ENCODE measurements at regions of chr2 and their contacts with region 1.

Region 1: DNA sequence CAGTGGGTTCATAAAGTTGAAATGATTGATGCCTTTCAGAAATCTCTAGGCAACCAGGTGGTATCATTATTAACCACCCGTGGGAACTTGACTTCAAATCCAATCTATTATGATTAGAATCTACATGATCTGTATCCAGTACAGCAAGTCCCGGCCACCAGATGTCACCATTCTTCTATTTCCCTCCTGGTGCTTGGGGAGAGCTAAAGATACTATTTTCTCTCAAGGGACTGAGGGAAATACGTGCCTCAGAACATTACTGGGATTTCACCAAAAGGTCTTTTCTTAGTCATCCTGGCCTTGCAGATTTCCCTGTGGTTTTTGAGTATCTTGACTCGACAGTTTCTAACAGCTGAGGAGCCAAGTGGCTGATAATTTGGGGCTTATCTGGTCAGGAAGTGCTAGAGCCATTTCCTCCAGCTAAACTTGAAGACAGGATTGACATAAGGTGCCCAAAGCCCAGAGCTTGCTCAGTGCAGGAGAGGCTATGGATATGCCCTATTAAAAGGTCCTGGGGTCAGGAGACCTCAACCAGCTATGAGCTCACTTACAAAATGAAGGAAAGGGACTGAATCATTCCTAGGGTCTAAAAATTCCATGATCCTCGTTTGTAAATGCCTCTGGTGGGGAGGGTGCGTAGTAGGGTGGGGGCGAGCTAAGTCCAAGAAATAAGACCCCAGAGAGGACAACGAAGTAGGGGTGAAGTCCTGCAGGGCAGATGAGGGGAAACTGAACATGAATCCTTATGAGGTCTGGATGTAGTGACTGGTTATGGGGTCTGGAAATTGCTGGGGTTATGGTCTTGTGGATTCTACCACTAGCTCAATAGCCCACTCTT is 135.4 kb upstream of the MGAT5 start:
- DNase-seq: peak; percentile 60 to 91
- ATAC-seq: peak; percentile 43 to 65 (median 51)
- H3K4me3 ChIP-seq: no peak overlapping the region
- H3K4me3 Mint-ChIP-seq: peak overlapping the region; percentile 100
- H3K27ac ChIP-seq: no peak overlapping the region
- H3K27ac Mint-ChIP-seq: peak overlapping the region; percentile 89 to 94
- H3K4me1 ChIP-seq: peaks cover 34% of the 10 kb centered on the region
- H3K4me1 Mint-ChIP-seq: peaks cover 37 to 39% of the 10 kb centered on the region in 2 donors
- H3K27me3 ChIP-seq: no peaks in the 10 kb centered on the region
- H3K27me3 Mint-ChIP-seq: peaks cover 0 to 24% of the 10 kb centered on the region in 2 donors
- CTCF ChIP-seq: peak; percentile 73

Region 2: GRCh38 chr2:134146620-134147019 is 28.1 kb after region 1 on chr2:
- intact Hi-C with region 1: no loop called
- DNase-seq: no peak
- ATAC-seq: no peak
- H3K4me3 ChIP-seq: no peak overlapping the region
- H3K4me3 Mint-ChIP-seq: no peak overlapping the region
- H3K27ac ChIP-seq: no peak overlapping the region
- H3K27ac Mint-ChIP-seq: no peak overlapping the region
- H3K4me1 ChIP-seq: peaks cover 14% of the 10 kb centered on the region
- H3K4me1 Mint-ChIP-seq: peaks cover 59 to 60% of the 10 kb centered on the region in 2 donors
- H3K27me3 ChIP-seq: no peaks in the 10 kb centered on the region
- H3K27me3 Mint-ChIP-seq: no peaks in the 10 kb centered on the region
- CTCF ChIP-seq: no peak

Region 3: DNA sequence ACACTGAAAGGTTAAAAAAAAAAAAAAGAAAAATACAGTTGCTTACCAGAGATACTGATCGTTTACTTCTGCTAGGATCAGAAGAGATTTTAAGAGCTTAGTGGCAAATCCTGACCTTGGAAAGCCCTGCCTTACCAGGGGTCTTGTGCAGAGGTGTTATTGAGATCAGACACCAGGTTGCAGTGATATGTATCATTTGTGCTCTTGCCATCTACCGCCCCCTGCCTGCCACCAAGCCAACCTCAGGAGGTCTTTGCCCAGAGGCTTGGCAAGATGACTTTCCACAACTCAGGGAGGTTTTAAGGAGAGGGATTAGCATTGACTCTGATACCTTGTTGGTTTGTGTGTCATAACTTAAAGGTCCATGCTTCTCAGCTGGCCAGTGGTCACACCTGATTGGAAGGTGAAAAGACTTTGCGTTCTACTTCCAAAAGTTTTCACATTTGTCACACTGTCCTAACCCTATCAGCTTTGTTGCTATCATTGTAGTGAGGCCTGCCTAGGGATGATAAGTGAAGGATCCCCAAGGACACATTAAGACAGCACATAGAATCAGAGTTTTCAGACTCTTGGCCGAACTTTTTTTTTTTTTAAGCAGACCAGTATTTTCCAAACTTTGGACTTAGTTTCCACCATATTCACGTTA is 89.2 kb after region 1 on chr2:
- intact Hi-C with region 1: loop called (anchors 5 kb)
- DNase-seq: peak; percentile 51 to 83
- ATAC-seq: peak; percentile 78 to 93 (median 91)
- H3K4me3 ChIP-seq: no peak overlapping the region
- H3K4me3 Mint-ChIP-seq: no peak overlapping the region
- H3K27ac ChIP-seq: no peak overlapping the region
- H3K27ac Mint-ChIP-seq: no peak overlapping the region
- H3K4me1 ChIP-seq: peaks cover 12% of the 10 kb centered on the region
- H3K4me1 Mint-ChIP-seq: peaks cover 11 to 18% of the 10 kb centered on the region in 2 donors
- H3K27me3 ChIP-seq: no peaks in the 10 kb centered on the region
- H3K27me3 Mint-ChIP-seq: no peaks in the 10 kb centered on the region
- CTCF ChIP-seq: peak; percentile 60

Region 4: GRCh38 chr2:134245340-134245984 is 127.0 kb after region 1 on chr2:
- intact Hi-C with region 1: loop called (anchors 1 kb)
- DNase-seq: peak; percentile 62 to 86
- ATAC-seq: peak; percentile 71 to 77 (median 75)
- H3K4me3 ChIP-seq: no peak overlapping the region
- H3K4me3 Mint-ChIP-seq: no peak overlapping the region
- H3K27ac ChIP-seq: no peak overlapping the region
- H3K27ac Mint-ChIP-seq: peak overlapping the region; percentile 16 to 42
- H3K4me1 ChIP-seq: peaks cover 42% of the 10 kb centered on the region
- H3K4me1 Mint-ChIP-seq: peaks cover 55 to 57% of the 10 kb centered on the region in 2 donors
- H3K27me3 ChIP-seq: no peaks in the 10 kb centered on the region
- H3K27me3 Mint-ChIP-seq: no peaks in the 10 kb centered on the region
- CTCF ChIP-seq: peak; percentile 91

Region 5: DNA sequence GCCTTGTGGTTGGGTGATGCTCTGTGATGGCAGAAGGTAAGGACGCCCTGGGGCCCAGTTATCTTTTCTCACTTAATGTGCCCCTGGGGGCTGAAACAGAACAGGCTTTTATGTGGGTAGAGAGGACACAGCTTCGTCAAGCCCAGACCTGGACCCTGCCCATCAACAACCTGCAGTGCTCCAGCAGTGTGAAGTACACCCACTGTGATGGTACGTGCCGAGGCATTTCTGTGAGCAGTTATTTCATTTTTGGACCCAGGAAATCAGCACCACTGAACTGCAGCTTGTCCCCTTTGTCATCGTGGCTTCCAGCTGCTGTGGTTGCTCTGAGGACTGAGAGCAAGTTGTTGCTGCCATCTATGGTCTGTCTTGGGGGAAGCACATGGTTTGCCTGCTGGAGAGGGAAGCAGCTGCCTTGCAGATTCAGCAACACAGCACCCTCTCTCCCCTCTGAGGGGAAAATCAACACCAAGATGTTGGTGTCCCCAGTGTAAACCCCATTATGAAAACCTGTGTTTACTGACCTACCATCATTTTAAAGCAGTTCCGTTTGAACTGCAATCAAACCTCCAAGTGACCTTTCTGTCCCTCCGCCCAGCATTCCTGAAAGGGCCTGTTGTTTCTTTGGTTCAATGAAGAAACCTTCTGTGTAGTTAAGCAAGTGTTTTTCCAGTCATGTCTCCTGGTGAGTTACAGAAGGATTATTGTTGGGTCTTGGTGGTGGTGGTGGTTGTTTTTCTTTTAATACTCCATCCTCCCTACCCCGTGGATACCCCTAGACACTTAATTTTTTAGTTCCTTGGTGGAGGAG is 293.5 kb after region 1 on chr2:
- intact Hi-C with region 1: loop called (anchors 1 kb)
- DNase-seq: peak; percentile 34 to 84
- ATAC-seq: peak; percentile 86 to 95 (median 93)
- H3K4me3 ChIP-seq: no peak overlapping the region
- H3K4me3 Mint-ChIP-seq: no peak overlapping the region
- H3K27ac ChIP-seq: peak overlapping the region; percentile 2
- H3K27ac Mint-ChIP-seq: no peak overlapping the region
- H3K4me1 ChIP-seq: peaks cover 28% of the 10 kb centered on the region
- H3K4me1 Mint-ChIP-seq: peaks cover 45 to 46% of the 10 kb centered on the region in 2 donors
- H3K27me3 ChIP-seq: no peaks in the 10 kb centered on the region
- H3K27me3 Mint-ChIP-seq: no peaks in the 10 kb centered on the region
- CTCF ChIP-seq: peak; percentile 43

Region 6: DNA sequence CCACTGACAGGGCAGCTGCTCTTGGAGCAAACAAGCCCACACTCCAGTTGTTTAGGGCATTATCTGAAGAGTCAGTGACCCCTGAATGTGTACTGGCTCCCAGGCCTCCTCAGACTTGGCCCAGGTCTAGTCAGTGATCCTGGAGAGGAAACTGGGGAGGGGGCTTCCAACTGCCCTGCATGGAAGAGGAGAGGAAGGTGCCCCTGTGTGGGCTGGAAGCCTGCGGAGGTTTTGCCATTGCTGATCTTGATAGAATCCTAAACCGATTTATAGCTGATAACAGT is 332.8 kb after region 1 on chr2:
- intact Hi-C with region 1: loop called (anchors 2 kb)
- DNase-seq: no peak
- ATAC-seq: no peak
- H3K4me3 ChIP-seq: no peak overlapping the region
- H3K4me3 Mint-ChIP-seq: peak overlapping the region; percentile 2
- H3K27ac ChIP-seq: no peak overlapping the region
- H3K27ac Mint-ChIP-seq: peak overlapping the region in 1 of 2 donors; percentile 19
- H3K4me1 ChIP-seq: no peaks in the 10 kb centered on the region
- H3K4me1 Mint-ChIP-seq: peaks cover 4 to 6% of the 10 kb centered on the region in 2 donors
- H3K27me3 ChIP-seq: no peaks in the 10 kb centered on the region
- H3K27me3 Mint-ChIP-seq: no peaks in the 10 kb centered on the region
- CTCF ChIP-seq: no peak

Region 7: GRCh38 chr2:134897932-134898331 is 779.4 kb after region 1 on chr2:
- intact Hi-C with region 1: loop called (anchors 5 kb)
- DNase-seq: peak in 1 of 2 donors; percentile 38
- ATAC-seq: no peak
- H3K4me3 ChIP-seq: no peak overlapping the region
- H3K4me3 Mint-ChIP-seq: no peak overlapping the region
- H3K27ac ChIP-seq: no peak overlapping the region
- H3K27ac Mint-ChIP-seq: no peak overlapping the region
- H3K4me1 ChIP-seq: no peaks in the 10 kb centered on the region
- H3K4me1 Mint-ChIP-seq: no peaks in the 10 kb centered on the region
- H3K27me3 ChIP-seq: no peaks in the 10 kb centered on the region
- H3K27me3 Mint-ChIP-seq: peaks cover 0 to 2% of the 10 kb centered on the region in 2 donors
- CTCF ChIP-seq: peak; percentile 66

Measured in natural killer cell (primary cell).